Endothelial cell of umbilical vein (primary cell): ENCODE measurements at regions of chr4 and their contacts with region 1.

Region 1: DNA sequence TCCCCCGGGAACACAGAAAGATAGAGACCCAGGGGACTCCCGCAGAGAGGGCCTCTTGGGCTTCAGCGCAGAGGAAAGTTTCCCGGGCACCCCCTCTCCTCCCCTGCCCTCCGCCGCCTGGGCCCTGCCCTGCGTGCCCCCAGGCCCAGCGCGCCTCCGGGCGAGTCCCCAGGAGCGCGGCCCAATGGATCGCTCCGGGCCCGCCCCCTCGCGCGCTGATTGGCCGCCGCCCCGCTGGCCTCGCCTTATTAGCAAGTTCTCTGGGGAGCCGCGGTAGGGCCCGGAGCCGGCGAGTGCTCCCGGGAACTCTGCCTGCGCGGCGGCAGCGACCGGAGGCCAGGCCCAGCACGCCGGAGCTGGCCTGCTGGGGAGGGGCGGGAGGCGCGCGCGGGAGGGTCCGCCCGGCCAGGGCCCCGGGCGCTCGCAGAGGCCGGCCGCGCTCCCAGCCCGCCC is at the start of gene MSX1:
- DNase-seq: peak; percentile 73
- H3K4me3 ChIP-seq: peak within 1 kb of the TSS; percentile 35 to 66 (median 61)
- H3K27ac ChIP-seq: no peak within 1 kb of the TSS
- H3K4me1 ChIP-seq: peaks cover 15% of the 10 kb centered on the region
- H3K27me3 ChIP-seq: peaks cover 44 to 61% of the 10 kb centered on the region in 2 experiments
- CTCF ChIP-seq: no peak
- POLR2A ChIP-seq: peak; percentile 59
- total RNA-seq, gene MSX1: 4.1 and 5.0 TPM in 2 replicates

Region 2: DNA sequence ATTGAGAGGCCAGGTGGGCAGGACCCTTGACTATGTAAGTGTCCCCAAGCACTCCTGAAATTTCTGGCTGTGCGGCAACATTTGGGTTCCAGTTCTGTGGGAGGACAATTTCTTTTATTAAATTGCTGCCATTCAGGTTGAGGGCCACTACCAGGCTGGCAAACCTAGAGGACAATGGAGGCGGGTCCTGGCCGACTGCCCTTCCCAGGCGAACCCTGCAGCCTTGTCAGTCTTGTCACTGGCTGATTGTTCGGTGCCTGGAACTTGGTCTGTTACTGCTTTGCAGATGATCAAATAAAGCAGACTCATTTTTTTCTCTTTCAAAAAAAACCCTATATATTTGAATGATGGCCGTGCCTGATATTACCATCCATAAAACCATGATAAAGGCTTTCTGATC is 604.8 kb before region 1 on chr4:
- CTCF ChIA-PET with region 1: no interaction called
- POLR2A ChIA-PET with region 1: no interaction called
- dilution Hi-C with region 1: no loop called
- intact Hi-C with region 1: loop called (anchors 5 kb)
- DNase-seq: no peak
- H3K4me3 ChIP-seq: no peak overlapping the region
- H3K27ac ChIP-seq: no peak overlapping the region
- H3K4me1 ChIP-seq: no peaks in the 10 kb centered on the region
- H3K27me3 ChIP-seq: no peaks in the 10 kb centered on the region
- CTCF ChIP-seq: no peak
- POLR2A ChIP-seq: no peak

Region 3: DNA sequence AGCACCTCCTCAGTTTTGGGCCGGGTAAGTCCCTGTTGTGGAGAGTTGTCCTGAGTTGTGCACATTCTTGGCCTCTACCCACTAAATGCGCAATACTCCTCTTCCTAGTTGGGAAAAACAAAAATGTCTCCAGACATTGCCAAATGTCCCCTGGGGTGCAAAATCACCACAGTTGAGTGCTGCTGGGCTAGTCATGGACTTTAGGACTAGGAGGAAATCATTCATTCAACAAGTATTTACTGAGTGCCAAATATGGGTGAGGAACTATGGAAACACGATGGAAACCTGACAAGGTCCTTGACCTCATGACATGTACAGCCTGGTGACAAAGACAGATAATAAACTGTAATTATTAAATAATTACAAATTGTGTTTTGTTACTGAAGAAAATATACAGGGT is 389.2 kb before region 1 on chr4:
- CTCF ChIA-PET with region 1: no interaction called
- POLR2A ChIA-PET with region 1: no interaction called
- dilution Hi-C with region 1: no loop called
- intact Hi-C with region 1: loop called (anchors 5 kb)
- DNase-seq: no peak
- H3K4me3 ChIP-seq: no peak overlapping the region
- H3K27ac ChIP-seq: no peak overlapping the region
- H3K4me1 ChIP-seq: peaks cover 6% of the 10 kb centered on the region
- H3K27me3 ChIP-seq: no peaks in the 10 kb centered on the region
- CTCF ChIP-seq: no peak
- POLR2A ChIP-seq: no peak

Region 4: GRCh38 chr4:4575273-4576211 is 283.9 kb before region 1 on chr4:
- CTCF ChIA-PET with region 1: no interaction called
- POLR2A ChIA-PET with region 1: no interaction called
- dilution Hi-C with region 1: no loop called
- intact Hi-C with region 1: loop called (anchors 10 kb)
- DNase-seq: peak; percentile 64
- H3K4me3 ChIP-seq: peak overlapping the region; percentile 39 to 63 (median 50)
- H3K27ac ChIP-seq: peak overlapping the region; percentile 62
- H3K4me1 ChIP-seq: peaks cover 5% of the 10 kb centered on the region
- H3K27me3 ChIP-seq: no peaks in the 10 kb centered on the region
- CTCF ChIP-seq: peak in 1 of 2 donors; percentile 51
- POLR2A ChIP-seq: peak; percentile 58

Region 5: GRCh38 chr4:4659871-4660651 is 199.4 kb before region 1 on chr4:
- CTCF ChIA-PET with region 1: no interaction called
- POLR2A ChIA-PET with region 1: no interaction called
- dilution Hi-C with region 1: no loop called
- intact Hi-C with region 1: loop called (anchors 10 kb)
- DNase-seq: peak; percentile 69
- H3K4me3 ChIP-seq: no peak overlapping the region
- H3K27ac ChIP-seq: peak overlapping the region; percentile 58
- H3K4me1 ChIP-seq: peaks cover 11% of the 10 kb centered on the region
- H3K27me3 ChIP-seq: peaks cover 0 to under 1% of the 10 kb centered on the region in 2 experiments
- CTCF ChIP-seq: no peak
- POLR2A ChIP-seq: no peak

Region 6: DNA sequence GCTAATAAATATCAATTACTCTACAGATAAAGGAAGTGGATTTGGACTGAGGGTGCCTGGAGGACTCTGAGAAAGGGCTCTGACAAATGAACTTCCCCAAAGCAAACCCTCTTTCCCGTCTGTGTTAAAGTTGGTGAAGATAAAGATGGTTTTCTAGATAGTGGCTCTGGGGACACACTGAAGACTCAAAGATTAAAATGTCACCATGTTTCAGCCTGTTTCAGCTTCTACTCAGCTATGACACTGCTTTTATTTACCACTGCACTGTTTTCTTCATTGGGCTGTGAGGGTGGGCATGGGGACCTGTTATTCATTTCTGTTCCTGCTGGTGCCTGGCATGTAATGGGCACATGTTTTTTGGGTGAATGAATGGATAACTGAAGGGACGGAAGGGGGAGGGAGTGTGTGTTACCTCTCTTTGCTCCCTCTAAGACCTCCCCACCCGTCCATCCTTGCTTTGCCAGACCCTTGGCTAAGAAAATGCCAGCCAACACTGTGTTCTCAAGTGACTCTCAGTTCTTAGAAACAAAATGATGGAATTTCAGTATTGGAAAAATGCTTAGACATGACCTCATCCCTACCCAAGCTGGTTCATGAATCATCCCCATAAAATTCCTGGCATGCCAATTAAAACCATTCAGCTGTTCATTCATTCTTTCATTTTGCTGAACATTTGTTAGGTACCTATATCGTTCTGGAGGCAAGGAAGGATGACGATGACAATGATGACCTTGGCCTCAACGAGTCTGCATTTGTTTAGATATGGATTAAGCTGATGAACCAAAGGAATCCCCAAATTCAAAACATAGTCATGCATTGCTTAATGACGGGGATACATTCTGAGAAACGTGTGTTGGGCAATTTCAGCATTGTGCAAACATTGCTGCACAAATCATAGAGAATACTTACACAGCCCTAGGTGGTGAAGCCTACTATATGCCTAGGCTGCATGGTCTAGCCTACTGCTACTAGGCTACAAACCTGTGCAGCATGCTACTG is 178.4 kb after region 1 on chr4:
- CTCF ChIA-PET with region 1: no interaction called
- POLR2A ChIA-PET with region 1: no interaction called
- dilution Hi-C with region 1: no loop called
- intact Hi-C with region 1: loop called (anchors 2 kb)
- DNase-seq: peak; percentile 83
- H3K4me3 ChIP-seq: no peak overlapping the region
- H3K27ac ChIP-seq: peak overlapping the region; percentile 88
- H3K4me1 ChIP-seq: peaks cover 43% of the 10 kb centered on the region
- H3K27me3 ChIP-seq: no peaks in the 10 kb centered on the region
- CTCF ChIP-seq: no peak
- POLR2A ChIP-seq: no peak

Region 7: GRCh38 chr4:5186271-5187064 is 327.1 kb after region 1 on chr4:
- CTCF ChIA-PET with region 1: no interaction called
- POLR2A ChIA-PET with region 1: no interaction called
- dilution Hi-C with region 1: no loop called
- intact Hi-C with region 1: no loop called
- DNase-seq: peak; percentile 54
- H3K4me3 ChIP-seq: no peak overlapping the region
- H3K27ac ChIP-seq: no peak overlapping the region
- H3K4me1 ChIP-seq: no peaks in the 10 kb centered on the region
- H3K27me3 ChIP-seq: no peaks in the 10 kb centered on the region
- CTCF ChIP-seq: no peak
- POLR2A ChIP-seq: no peak

Region 8: DNA sequence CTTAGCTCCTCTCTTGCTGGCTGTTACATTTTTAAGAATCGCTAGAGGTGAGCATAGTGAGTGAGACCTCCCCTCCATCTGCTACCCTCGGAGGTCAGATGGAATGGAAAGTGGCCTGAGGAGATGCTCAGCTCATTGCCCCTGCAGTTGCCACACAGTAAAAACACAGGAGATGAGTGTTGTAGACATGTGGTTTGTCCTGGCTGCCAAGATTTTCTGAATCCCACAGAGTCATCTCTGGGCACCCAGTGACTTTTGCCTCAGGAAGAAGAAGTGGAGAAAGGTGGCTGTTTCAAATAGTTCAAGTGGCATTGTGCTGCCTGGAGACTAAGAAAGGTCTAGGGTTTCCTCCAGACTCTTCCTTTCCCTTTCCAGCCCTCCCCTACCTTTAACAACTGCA is 462.9 kb after region 1 on chr4:
- CTCF ChIA-PET with region 1: no interaction called
- POLR2A ChIA-PET with region 1: no interaction called
- dilution Hi-C with region 1: no loop called
- intact Hi-C with region 1: no loop called
- DNase-seq: no peak
- H3K4me3 ChIP-seq: no peak overlapping the region
- H3K27ac ChIP-seq: no peak overlapping the region
- H3K4me1 ChIP-seq: no peaks in the 10 kb centered on the region
- H3K27me3 ChIP-seq: no peaks in the 10 kb centered on the region
- CTCF ChIP-seq: no peak
- POLR2A ChIP-seq: no peak